CD8-positive, alpha-beta memory T cell (primary cell): ENCODE measurements at regions of chr15 and their contacts with region 1.

Region 1: DNA sequence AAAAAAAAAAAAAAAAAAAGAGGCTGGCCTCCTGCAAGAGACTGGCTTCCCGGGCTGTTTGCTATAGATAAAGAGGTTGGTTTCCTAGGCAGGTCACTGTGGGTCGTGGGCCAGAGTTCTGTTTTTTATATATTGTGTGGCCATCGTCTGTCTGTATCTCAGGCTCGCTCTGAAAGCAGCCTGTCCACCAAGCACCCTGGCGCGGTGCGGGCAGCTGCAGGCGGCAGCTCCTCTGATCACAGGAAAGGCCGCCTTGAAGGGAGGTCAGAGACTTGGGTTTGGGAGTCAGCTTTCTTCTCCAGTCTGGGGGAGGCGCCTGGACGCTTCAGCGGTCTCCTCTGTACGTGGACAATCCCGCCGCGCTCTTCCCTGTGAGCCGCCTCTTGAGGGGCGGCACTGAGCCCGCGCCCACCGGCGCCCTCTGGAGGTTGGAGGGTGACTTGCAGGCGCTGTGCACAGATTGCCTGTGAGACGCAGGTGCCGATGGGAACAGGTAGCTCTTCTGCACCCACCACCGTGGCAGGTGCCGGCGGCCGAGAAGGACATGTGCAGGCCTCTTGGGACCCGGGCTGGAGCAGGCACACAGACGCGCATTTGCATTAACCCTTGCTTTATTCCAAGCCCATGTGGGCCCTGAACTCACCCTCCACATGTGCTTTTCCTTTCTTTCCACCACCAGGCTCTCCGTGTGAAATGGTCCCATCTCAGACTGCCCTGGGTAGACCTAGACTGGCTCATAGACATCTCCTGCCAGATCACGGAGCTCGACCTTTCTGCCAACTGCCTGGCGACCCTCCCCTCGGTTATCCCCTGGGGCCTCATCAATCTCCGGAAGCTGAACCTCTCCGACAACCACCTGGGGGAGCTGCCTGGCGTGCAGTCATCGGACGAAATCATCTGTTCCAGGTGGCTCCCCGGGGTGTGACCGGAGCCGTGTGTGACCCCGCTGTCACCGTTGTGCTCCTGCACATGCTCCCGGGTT is 89.3 kb downstream of the LRRK1 start:
- DNase-seq: peak; percentile 75 to 86 (median 79)
- H3K4me3 ChIP-seq: peak overlapping the region; percentile 63
- H3K4me3 Mint-ChIP-seq: peak overlapping the region; percentile 89 to 94 (median 93)
- H3K27ac ChIP-seq: no peak overlapping the region
- H3K27ac Mint-ChIP-seq: peak overlapping the region in 6 of 8 donors; percentile 17 to 78 (median 56)
- H3K4me1 ChIP-seq: peaks cover 13% of the 10 kb centered on the region
- H3K4me1 Mint-ChIP-seq: peaks cover 17 to 24% (median 18%) of the 10 kb centered on the region in 3 donors
- H3K27me3 ChIP-seq: no peaks in the 10 kb centered on the region
- H3K27me3 Mint-ChIP-seq: peaks cover 9 to 12% of the 10 kb centered on the region in 2 donors

Region 2: DNA sequence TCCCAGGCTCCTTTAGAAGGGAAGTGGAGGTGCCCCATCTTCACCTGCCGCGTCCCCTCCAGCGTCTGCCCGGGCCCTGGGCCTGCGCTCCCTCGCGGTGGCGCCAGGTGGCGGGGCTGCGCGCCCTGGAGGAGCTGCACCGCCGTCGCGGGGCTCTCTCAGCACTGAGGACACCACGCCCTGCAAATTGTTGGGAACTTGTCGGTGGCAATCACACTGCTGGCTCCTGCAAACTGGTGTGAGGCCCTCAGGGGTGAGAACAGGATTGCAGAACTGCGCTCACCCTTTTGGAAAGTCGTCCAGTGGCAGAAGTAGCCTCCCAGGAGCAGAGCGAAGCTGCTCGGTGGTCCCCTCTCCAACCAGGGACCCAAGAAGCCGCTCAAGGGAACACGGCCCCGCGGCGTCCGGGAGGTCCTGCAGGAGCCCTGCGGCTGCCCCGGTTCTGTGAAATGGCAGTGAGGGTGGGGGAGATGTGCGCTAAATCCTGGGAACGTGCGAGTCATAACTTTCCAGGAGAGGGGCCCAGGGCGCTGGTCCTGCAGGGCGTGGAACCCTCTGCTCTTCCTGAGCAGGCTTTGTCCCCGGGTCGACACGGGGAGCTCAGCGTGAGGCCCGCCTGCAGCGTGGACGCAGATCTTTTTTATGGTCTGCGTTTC is 90.3 kb before region 1 on chr15:
- CTCF ChIA-PET with region 1: interaction called, 34 read pairs
- POLR2A ChIA-PET with region 1: no interaction called
- DNase-seq: peak in 4 of 5 donors; percentile 18 to 54 (median 29)
- H3K4me3 ChIP-seq: peak overlapping the region; percentile 61
- H3K4me3 Mint-ChIP-seq: peak overlapping the region; percentile 67 to 87 (median 80)
- H3K27ac ChIP-seq: no peak overlapping the region
- H3K27ac Mint-ChIP-seq: peak overlapping the region in 1 of 8 donors; percentile 9
- H3K4me1 ChIP-seq: peaks cover 4% of the 10 kb centered on the region
- H3K4me1 Mint-ChIP-seq: peaks cover 10 to 23% (median 22%) of the 10 kb centered on the region in 3 donors
- H3K27me3 ChIP-seq: peaks cover 21% of the 10 kb centered on the region
- H3K27me3 Mint-ChIP-seq: peaks cover 48 to 75% of the 10 kb centered on the region in 2 donors

Region 3: DNA sequence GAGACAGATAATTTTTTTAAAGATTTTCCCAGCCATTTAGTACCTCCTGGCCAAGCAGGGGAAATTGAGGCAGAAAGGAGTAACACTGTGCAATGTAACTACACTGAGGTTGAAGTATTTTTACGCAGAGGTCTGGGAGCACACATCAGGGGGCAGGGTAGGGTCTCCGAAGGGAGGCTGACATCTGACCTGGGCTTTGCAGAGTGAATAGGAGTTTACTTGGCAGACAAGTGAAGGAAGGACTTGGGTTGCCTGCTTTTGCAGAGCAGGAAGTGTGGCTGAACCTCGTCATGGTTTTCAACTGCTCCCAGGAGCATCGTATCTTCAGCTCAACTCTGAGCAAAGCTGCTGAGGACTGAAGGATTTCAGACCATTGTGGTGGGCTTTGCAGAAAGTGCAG is 23.0 kb before region 1 on chr15:
- CTCF ChIA-PET with region 1: interaction called, 18 read pairs
- POLR2A ChIA-PET with region 1: no interaction called
- DNase-seq: no peak
- H3K4me3 ChIP-seq: no peak overlapping the region
- H3K4me3 Mint-ChIP-seq: no peak overlapping the region
- H3K27ac ChIP-seq: no peak overlapping the region
- H3K27ac Mint-ChIP-seq: no peak overlapping the region
- H3K4me1 ChIP-seq: no peaks in the 10 kb centered on the region
- H3K4me1 Mint-ChIP-seq: no peaks in the 10 kb centered on the region
- H3K27me3 ChIP-seq: no peaks in the 10 kb centered on the region
- H3K27me3 Mint-ChIP-seq: peaks cover 3 to 35% of the 10 kb centered on the region in 2 donors

Region 4: GRCh38 chr15:101024073-101024695 is 15.7 kb after region 1 on chr15:
- CTCF ChIA-PET with region 1: interaction called, 63 read pairs
- POLR2A ChIA-PET with region 1: no interaction called
- DNase-seq: no peak
- H3K4me3 ChIP-seq: no peak overlapping the region
- H3K4me3 Mint-ChIP-seq: no peak overlapping the region
- H3K27ac ChIP-seq: no peak overlapping the region
- H3K27ac Mint-ChIP-seq: no peak overlapping the region
- H3K4me1 ChIP-seq: no peaks in the 10 kb centered on the region
- H3K4me1 Mint-ChIP-seq: no peaks in the 10 kb centered on the region
- H3K27me3 ChIP-seq: no peaks in the 10 kb centered on the region
- H3K27me3 Mint-ChIP-seq: peaks cover 2 to 3% of the 10 kb centered on the region in 2 donors

Region 5: GRCh38 chr15:101242160-101242998 is 233.9 kb after region 1 on chr15:
- CTCF ChIA-PET with region 1: interaction called, 11 read pairs
- POLR2A ChIA-PET with region 1: no interaction called
- DNase-seq: peak; percentile 61 to 84 (median 81)
- H3K4me3 ChIP-seq: peak overlapping the region; percentile 40
- H3K4me3 Mint-ChIP-seq: peak overlapping the region; percentile 63 to 92 (median 81)
- H3K27ac ChIP-seq: peak overlapping the region; percentile 15
- H3K27ac Mint-ChIP-seq: peak overlapping the region; percentile 72 to 99 (median 94)
- H3K4me1 ChIP-seq: peaks cover 74% of the 10 kb centered on the region
- H3K4me1 Mint-ChIP-seq: peaks cover 86 to 98% (median 94%) of the 10 kb centered on the region in 3 donors
- H3K27me3 ChIP-seq: no peaks in the 10 kb centered on the region
- H3K27me3 Mint-ChIP-seq: no peaks in the 10 kb centered on the region

Region 6: DNA sequence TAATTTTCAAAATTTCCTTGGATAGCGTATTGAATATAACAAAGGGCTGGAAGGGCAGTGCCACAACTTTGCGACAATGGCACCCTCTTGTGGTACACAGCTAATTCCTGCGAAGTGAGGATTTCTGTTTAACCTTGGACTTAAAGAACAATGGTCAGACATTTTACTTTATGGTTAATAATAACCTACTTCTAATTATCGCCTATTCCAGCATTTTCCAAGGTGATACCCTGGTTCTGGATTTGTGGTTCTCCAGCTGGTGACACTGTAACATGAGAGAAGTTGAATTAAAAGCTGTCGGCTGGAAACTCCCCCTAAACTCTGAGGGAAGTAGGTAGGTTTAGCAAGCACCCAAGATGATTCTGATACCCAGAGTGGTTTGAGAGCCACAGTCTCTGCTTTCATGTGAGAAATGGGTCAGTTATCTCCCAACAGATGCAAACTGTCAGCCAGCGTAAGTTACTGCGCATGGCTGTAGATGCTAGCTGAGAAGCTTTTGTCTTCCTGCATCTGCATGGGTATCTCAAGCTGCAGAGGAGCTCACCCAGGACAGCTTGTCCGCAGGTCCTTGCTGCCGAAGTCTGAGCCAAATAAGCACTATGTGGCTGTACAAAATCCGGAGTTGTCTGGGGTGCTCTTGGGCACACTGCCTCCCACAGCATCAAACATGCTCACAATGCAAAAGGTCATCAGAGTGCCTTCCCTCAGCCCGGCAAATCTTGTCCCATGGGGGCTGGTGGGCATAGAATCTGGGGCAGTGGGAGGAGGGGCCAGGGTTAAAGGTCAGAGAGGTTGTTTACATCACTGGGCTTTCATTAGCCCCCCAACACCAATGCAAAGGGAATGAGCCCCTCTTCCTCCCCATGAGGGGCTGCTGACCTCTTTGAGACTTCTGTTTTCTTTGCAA is 250.0 kb after region 1 on chr15:
- CTCF ChIA-PET with region 1: interaction called, 30 read pairs
- POLR2A ChIA-PET with region 1: no interaction called
- DNase-seq: peak; percentile 27 to 64 (median 45)
- H3K4me3 ChIP-seq: no peak overlapping the region
- H3K4me3 Mint-ChIP-seq: peak overlapping the region in 1 of 7 donors; percentile 28
- H3K27ac ChIP-seq: no peak overlapping the region
- H3K27ac Mint-ChIP-seq: no peak overlapping the region
- H3K4me1 ChIP-seq: no peaks in the 10 kb centered on the region
- H3K4me1 Mint-ChIP-seq: peaks cover 0 to 5% (median 2%) of the 10 kb centered on the region in 3 donors
- H3K27me3 ChIP-seq: no peaks in the 10 kb centered on the region
- H3K27me3 Mint-ChIP-seq: peaks cover 10 to 16% of the 10 kb centered on the region in 2 donors